Right ventricle myocardium superior (tissue), 1 donor: ENCODE measurements at regions of chr4 and their contacts with region 1.

Region 1: GRCh38 chr4:70885174-70885573 is 17.0 kb upstream of the MOB1B start:
- DNase-seq: no peak
- ATAC-seq: peak; percentile 78

Region 2: GRCh38 chr4:70564033-70564432 is 321.1 kb before region 1 on chr4:
- intact Hi-C with region 1: no loop called
- DNase-seq: no peak
- ATAC-seq: no peak

Region 3: DNA sequence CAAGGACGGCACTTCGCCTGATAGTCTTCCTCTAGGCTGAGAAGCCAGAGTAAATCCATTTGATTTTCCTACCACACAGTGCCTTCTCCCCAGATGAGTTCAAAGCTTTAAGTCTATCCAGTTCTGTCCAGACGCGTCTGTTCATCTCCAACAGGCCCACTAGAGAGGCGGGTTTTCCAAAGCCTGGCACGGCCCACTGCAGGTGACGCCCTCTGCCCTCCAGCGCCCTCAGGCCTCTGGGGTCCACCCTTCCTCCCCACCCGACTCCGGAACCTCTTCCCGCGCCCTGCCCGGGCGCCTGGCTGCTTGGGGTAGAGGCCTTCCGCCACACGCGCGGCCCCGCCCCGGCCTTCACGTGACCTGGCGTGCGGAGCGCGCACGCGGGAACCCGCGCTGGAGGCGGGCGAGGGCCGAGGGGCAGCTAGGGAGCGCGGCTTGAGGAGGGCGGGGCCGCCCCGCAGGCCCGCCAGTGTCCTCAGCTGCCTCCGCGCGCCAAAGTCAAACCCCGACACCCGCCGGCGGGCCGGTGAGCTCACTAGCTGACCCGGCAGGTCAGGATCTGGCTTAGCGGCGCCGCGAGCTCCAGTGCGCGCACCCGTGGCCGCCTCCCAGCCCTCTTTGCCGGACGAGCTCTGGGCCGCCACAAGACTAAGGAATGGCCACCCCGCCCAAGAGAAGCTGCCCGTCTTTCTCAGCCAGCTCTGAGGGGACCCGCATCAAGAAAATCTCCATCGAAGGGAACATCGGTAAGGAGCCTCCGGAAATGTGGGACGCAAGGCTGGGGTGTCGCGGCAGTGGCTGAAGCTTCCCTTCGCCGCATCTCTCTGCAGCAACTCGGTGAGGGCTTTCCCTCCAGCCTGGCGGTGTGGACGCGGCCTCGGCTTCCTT is 108.3 kb after region 1 on chr4 and contains the start of gene DCK:
- intact Hi-C with region 1: loop called (anchors 10 kb)
- DNase-seq: peak; percentile 96
- ATAC-seq: peak; percentile 100
- total RNA-seq, gene DCK: 6.4 TPM